Right ventricle myocardium superior (tissue), 1 donor: ENCODE measurements at regions of chr5 and their contacts with region 1.

Region 1: GRCh38 chr5:155783246-155783645 is 543.7 kb upstream of the SGCD start:
- DNase-seq: no peak
- ATAC-seq: no peak

Region 2: GRCh38 chr5:155827949-155828348 is 44.7 kb after region 1 on chr5:
- intact Hi-C with region 1: loop called (anchors 2 kb)
- DNase-seq: no peak
- ATAC-seq: no peak